Heart right ventricle (tissue), 16 donors: ENCODE measurements at regions of chr7 and their contacts with region 1.

Region 1: GRCh38 chr7:93476491-93477344 is 97.8 kb downstream of the CALCR start:
- DNase-seq: no peak
- ATAC-seq: no peak
- H3K4me3 ChIP-seq: no peak overlapping the region
- H3K27ac ChIP-seq: no peak overlapping the region
- H3K4me1 ChIP-seq: no peaks in the 10 kb centered on the region
- H3K27me3 ChIP-seq: peaks cover 0 to 5% (median 0%) of the 10 kb centered on the region in 7 donors
- CTCF ChIP-seq: no peak

Region 2: DNA sequence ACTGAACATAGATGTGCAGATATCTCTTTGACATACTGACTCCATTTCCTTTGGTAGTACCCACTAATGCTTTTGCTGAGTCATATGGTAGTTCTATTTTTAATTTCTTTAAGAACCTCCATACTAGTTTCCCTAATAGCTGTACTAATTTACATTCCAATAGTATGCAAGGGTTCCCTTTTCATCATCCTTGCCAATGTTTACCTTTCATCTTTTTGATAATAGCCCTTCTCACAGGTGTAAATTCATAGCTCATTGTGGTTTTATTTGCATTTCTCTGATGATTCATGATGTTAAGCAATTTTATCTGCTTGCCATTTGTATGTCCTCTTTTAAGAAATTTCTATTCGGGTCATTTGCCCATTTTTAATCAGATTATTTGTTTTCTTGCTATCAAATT is 62.1 kb before region 1 on chr7:
- intact Hi-C with region 1: loop called in 1 of 10 experiments (anchors 10 kb)
- DNase-seq: no peak
- ATAC-seq: no peak
- H3K4me3 ChIP-seq: no peak overlapping the region
- H3K27ac ChIP-seq: no peak overlapping the region
- H3K4me1 ChIP-seq: no peaks in the 10 kb centered on the region
- H3K27me3 ChIP-seq: no peaks in the 10 kb centered on the region
- CTCF ChIP-seq: no peak